Left colon (tissue), 2 donors: ENCODE measurements at regions of chr1 and their contacts with region 1.

Region 1: GRCh38 chr1:67749844-67750689 is 65.1 kb downstream of the GADD45A start:
- DNase-seq: no peak
- ATAC-seq: peak; percentile 42

Region 2: GRCh38 chr1:67561704-67562113 is 188.4 kb before region 1 on chr1:
- intact Hi-C with region 1: loop called in 1 of 2 experiments (anchors 10 kb)
- DNase-seq: peak; percentile 94 to 99
- ATAC-seq: peak; percentile 88

Region 3: DNA sequence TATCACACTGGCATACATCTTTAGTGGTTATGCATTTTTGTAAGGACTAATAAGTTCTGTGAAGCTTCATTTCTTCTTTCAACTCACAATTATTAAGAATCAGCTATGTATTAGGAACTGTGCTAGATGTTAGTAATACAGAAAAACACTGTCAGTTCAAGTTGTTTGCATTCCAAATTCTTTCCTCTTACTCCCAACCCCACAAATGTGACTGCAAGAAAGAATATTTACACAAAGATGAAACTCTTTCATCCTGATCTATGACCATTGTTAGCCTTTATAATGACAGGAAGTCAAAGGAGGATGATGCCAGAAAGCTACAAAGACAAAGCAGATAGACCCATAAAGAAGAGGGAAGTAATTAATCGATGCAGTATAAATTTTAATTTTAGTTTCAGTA is 86.0 kb before region 1 on chr1:
- intact Hi-C with region 1: no loop called
- DNase-seq: no peak
- ATAC-seq: no peak